Body of pancreas (tissue), 4 donors: ENCODE measurements at regions of chr5 and their contacts with region 1.

Region 1: GRCh38 chr5:177500685-177501522 is 3.5 kb upstream of the PDLIM7 start:
- DNase-seq: peak; percentile 90 to 95 (median 92)
- ATAC-seq: peak; percentile 36
- H3K4me3 ChIP-seq: no peak overlapping the region
- H3K27ac ChIP-seq: no peak overlapping the region
- H3K4me1 ChIP-seq: peaks cover 24% of the 10 kb centered on the region
- H3K27me3 ChIP-seq: no peaks in the 10 kb centered on the region
- CTCF ChIP-seq: peak; percentile 86 to 95 (median 90)
- POLR2A ChIP-seq: no peak

Region 2: DNA sequence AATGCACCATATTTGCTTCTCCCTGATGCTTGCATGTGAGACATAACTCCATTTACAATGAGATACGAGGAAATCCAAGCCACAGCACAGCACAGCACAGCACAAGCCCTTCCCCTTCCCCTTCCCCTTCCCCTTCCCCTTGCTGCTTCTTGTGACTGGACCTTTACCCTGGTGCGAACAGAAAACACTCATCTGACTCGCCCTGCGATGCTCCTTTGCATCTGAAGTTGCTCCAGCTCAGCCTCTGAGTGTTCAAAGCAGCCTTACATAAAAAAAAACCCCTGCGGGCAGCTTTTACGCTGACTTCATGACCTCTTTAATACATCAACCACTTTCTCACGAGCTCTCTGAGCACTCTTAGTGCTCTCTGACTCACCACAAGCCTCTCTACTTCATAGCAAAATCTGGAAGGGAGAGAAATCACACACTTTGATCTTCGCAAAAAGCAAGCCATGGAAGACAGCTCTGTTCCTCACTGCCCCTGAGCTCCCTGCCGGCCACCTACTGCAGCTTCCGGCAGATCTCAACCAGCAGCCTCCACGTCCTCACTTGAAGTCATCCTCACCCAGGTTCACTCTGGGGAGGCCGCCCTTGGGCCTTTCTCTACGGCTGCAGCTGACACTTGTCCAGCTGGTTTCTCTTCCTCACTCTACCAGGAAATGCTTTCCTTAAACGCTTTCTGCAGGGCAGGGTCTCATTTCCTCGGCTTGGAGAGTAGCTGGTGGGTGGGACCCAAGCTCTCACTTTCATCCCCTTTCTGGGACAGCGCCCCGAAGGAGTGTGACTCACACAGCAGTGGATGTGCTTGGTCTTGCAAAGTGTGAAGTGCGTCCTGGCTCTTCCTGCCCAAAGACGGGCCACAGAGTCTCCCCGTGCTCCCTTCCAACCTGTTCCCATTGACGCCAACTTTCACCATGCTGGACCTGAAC is 111.4 kb before region 1 on chr5:
- intact Hi-C with region 1: loop called (anchors 5 kb)
- DNase-seq: peak in 1 of 4 donors; percentile 40
- ATAC-seq: no peak
- H3K4me3 ChIP-seq: no peak overlapping the region
- H3K27ac ChIP-seq: peak overlapping the region in 1 of 4 donors; percentile 19
- H3K4me1 ChIP-seq: no peaks in the 10 kb centered on the region
- H3K27me3 ChIP-seq: no peaks in the 10 kb centered on the region
- CTCF ChIP-seq: no peak
- POLR2A ChIP-seq: no peak